K562 (cell line): ENCODE measurements at regions of chr11 and their contacts with region 1.

Region 1: DNA sequence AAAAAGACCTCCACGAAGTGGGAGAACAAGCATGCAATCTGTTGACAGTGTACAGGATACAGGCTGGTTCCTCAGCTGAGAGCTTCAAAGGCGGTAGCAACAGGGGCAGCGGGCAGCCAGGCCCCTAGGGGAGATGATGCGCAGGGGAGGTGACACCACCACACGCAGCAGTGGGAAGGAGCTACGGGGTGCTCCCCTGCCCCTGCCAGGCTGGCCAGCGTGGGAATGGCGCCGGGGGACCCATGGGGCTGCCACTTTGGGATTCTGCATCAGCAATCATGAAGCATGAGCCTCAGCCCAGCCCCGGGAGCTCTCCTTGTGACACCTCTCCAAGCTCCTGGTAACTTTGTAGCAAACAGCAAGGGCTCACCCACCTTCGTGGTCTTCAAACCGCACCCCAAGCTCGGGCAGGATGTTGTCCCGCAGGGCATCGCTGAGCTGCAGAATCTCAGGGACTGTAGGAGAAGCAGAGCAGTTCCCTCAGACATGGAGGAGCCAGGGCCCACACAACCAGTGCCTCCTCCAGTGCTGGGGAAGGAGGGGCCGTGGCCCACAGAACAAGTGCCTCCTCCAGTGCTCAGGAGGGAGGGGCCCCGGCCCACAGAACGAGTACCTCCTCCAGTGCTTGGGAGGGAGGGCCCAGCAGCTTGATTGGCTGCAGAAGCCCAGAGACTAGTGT is 14.5 kb upstream of the NAP1L4 start:
- DNase-seq: peak in 1 of 4 experiments; percentile 34
- ATAC-seq: peak; percentile 66
- H3K4me3 ChIP-seq: no peak overlapping the region
- H3K27ac ChIP-seq: no peak overlapping the region
- H3K4me1 ChIP-seq: peaks cover 0 to 19% of the 10 kb centered on the region in 2 experiments; a peak in 1 of 5 replicates
- H3K27me3 ChIP-seq: no peaks in the 10 kb centered on the region
- CTCF ChIP-seq: no peak
- EP300 ChIP-seq: no peak
- POLR2A ChIP-seq: no peak
- RAD21 ChIP-seq: no peak

Region 2: GRCh38 chr11:2992234-2992996 is 14.2 kb before region 1 on chr11 and contains the start of gene NAP1L4:
- CTCF ChIA-PET with region 1: no interaction called
- POLR2A ChIA-PET with region 1: interaction called, 17 read pairs
- in situ Hi-C with region 1: no loop called
- intact Hi-C with region 1: no loop called
- DNase-seq: peak; percentile 99 to 100 (median 100)
- ATAC-seq: peak; percentile 87
- H3K4me3 ChIP-seq: peak within 1 kb of the TSS; percentile 52
- H3K27ac ChIP-seq: peak within 1 kb of the TSS; percentile 84
- H3K4me1 ChIP-seq: peaks cover 13 to 18% of the 10 kb centered on the region in 2 experiments; a peak in 4 of 5 replicates
- H3K27me3 ChIP-seq: no peaks in the 10 kb centered on the region
- CTCF ChIP-seq: no peak
- EP300 ChIP-seq: no peak
- POLR2A ChIP-seq: peak; percentile 91
- RAD21 ChIP-seq: no peak
- polyA plus RNA-seq, gene NAP1L4: 34.1 to 50.7 TPM

Region 3: GRCh38 chr11:3021125-3021524 is 14.5 kb after region 1 on chr11:
- CTCF ChIA-PET with region 1: no interaction called
- POLR2A ChIA-PET with region 1: interaction called, 14 read pairs
- in situ Hi-C with region 1: no loop called
- intact Hi-C with region 1: no loop called
- DNase-seq: peak; percentile 45 to 70 (median 59)
- ATAC-seq: peak; percentile 86
- H3K4me3 ChIP-seq: no peak overlapping the region
- H3K27ac ChIP-seq: no peak overlapping the region
- H3K4me1 ChIP-seq: peaks cover 0 to 3% of the 10 kb centered on the region in 2 experiments; a peak in 1 of 5 replicates
- H3K27me3 ChIP-seq: no peaks in the 10 kb centered on the region
- CTCF ChIP-seq: peak; percentile 51 to 58 (median 53)
- EP300 ChIP-seq: no peak
- POLR2A ChIP-seq: no peak
- RAD21 ChIP-seq: peak in 1 of 2 experiments; percentile 30; a peak in 2 of 4 replicates